Activated CD8-positive, alpha-beta T cell treated with anti-CD3 and anti-CD28 coated beads, Interleukin-2, amount 10 ng/mL, durations not matched to agents 7 days and 5 days (primary cell): ENCODE measurements at regions of chr11 and their contacts with region 1.

Region 1: DNA sequence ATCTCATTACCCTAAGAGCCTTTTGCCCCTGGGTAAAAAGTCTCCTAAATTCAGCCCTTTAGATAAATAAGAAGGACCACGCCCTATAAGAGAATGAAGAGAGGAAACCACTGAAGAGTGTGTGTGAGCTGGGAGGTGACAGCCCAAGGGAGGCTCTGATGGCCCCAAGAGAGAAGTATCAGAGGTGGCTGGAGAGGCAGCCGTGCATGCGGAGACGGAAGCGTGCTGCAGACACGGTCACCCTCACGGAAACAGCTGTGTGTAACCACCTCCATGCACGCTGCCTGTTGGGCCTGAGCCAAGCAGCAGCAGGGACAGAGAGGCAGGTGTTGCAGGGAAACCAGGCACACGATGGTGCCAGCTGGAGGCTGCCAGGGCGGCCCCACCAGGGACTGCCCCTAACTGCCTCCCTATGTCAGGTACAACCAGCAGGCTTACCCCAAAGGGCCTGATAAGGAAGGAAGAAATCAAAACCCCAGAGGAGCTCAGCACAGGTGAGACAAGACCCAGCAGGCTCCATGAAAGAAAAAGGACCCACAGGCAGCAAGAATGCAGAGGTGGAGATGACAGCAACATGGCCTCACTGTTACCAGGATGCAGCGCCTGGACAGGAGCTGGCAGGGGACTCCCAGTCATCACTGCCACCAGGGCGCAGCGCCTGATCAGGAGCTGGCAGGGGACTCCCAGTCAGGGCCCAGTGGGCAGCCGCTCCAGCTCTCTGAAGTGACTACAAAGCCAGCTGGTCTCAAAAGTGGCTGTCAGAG is 7.8 kb downstream of the LARGE2 start:
- DNase-seq: peak; percentile 64
- ATAC-seq: peak; percentile 81
- H3K4me3 Mint-ChIP-seq: peak overlapping the region; percentile 38
- H3K27ac Mint-ChIP-seq: peak overlapping the region; percentile 87
- H3K4me1 Mint-ChIP-seq: peaks cover 40% of the 10 kb centered on the region
- H3K27me3 Mint-ChIP-seq: no peaks in the 10 kb centered on the region

Region 2: DNA sequence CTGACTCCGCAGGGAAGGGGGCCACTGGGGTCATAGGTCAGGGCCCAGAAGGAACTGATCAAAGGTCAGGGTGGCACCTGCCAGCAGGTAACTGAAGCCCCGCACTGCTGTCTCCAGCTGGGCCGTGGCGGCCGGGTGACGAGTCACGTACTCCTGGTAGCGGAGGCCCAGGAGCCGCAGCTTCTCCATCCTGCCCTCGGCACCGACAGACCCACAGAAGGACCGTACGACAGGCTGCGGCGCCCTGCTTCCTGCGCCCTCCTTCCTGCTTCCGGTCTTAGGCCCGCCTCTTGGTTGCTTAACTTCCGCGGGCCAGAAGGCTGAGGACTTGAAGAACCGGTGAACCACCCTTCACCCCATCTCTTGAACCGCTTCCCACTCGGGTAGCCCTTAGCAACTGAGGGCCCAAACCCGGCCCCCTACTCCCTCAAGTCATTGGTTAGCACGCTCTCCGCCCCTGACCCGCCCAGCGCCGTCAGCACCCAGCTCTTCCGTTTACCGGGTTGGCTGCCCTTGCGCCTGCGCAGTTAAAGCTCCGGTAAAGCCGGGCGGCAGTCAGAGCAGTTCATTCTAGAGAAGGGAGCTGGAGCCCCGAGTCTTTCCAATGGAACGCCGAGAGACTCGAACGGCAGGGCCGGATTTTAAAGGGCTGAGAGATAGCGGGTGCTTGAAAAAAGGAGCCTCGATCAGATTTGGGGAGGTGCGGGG is 12.4 kb before region 1 on chr11 and contains the start of gene PEX16:
- CTCF ChIA-PET with region 1: no interaction called
- POLR2A ChIA-PET with region 1: interaction called, 16 read pairs
- DNase-seq: peak; percentile 98
- ATAC-seq: peak; percentile 94
- H3K4me3 Mint-ChIP-seq: peak within 1 kb of the TSS; percentile 94
- H3K27ac Mint-ChIP-seq: peak within 1 kb of the TSS; percentile 99
- H3K4me1 Mint-ChIP-seq: peaks cover 50% of the 10 kb centered on the region
- H3K27me3 Mint-ChIP-seq: peaks cover 6% of the 10 kb centered on the region
- total RNA-seq, gene PEX16: 50.0 to 54.6 TPM

Region 3: GRCh38 chr11:45973601-45974000 is 43.4 kb after region 1 on chr11:
- CTCF ChIA-PET with region 1: no interaction called
- POLR2A ChIA-PET with region 1: no interaction called
- DNase-seq: no peak
- ATAC-seq: no peak
- H3K4me3 Mint-ChIP-seq: no peak overlapping the region
- H3K27ac Mint-ChIP-seq: no peak overlapping the region
- H3K4me1 Mint-ChIP-seq: no peaks in the 10 kb centered on the region
- H3K27me3 Mint-ChIP-seq: no peaks in the 10 kb centered on the region